BJ (cell line): ENCODE measurements at regions of chr10 and their contacts with region 1.

Region 1: DNA sequence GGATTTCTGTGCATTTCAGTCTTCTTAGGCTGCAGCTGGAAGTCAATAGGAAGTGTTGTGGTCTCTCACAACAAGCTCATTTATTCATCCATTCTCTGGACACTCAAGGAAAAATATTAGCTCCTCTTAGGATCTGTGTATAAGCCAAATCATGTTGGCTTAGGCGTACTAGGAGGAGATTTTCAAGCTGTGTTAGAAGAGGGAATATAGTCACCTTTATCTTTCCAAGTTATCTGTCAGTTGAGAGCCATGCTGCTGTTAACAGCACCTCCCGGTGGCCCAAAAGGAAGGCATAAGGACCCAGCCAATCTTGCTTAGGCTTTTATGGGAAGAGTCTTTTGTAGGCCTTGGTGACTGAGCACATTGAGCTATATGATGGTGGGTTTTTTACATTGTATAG is 220.0 kb downstream of the LRMDA start:
- DNase-seq: no peak
- H3K4me3 ChIP-seq: no peak overlapping the region
- H3K27me3 ChIP-seq: no peaks in the 10 kb centered on the region; the same call in 1 of the 2 replicates
- CTCF ChIP-seq: peak; percentile 37; the same call in 1 of the 2 replicates

Region 2: GRCh38 chr10:75401569-75402485 is 249.6 kb before region 1 on chr10 and contains the start of gene ZNF503:
- CTCF ChIA-PET with region 1: interaction called, 11 read pairs
- POLR2A ChIA-PET with region 1: no interaction called
- DNase-seq: peak; percentile 78
- H3K4me3 ChIP-seq: peak within 1 kb of the TSS; percentile 80
- H3K27me3 ChIP-seq: 0 out of 2 replicates have a peak, but pooled peaks cover 2% of the 10 kb centered on the region
- CTCF ChIP-seq: peak; percentile 27; the same call in 1 of the 2 replicates
- polyA plus RNA-seq, gene ZNF503: 0.45 and 0.51 TPM in 2 replicates